Prostate gland (tissue), 2 donors: ENCODE measurements at regions of chr4 and their contacts with region 1.

Region 1: GRCh38 chr4:54228056-54228527 is 1.0 kb upstream of the PDGFRA start:
- DNase-seq: no peak
- H3K4me3 ChIP-seq: peak overlapping the region in 1 of 2 donors; percentile 3
- H3K27ac ChIP-seq: no peak overlapping the region
- H3K4me1 ChIP-seq: no peaks in the 10 kb centered on the region
- H3K27me3 ChIP-seq: peaks cover 20% of the 10 kb centered on the region
- CTCF ChIP-seq: peak in 2 of 4 experiments; percentile 47 to 55
- POLR2A ChIP-seq: no peak

Region 2: DNA sequence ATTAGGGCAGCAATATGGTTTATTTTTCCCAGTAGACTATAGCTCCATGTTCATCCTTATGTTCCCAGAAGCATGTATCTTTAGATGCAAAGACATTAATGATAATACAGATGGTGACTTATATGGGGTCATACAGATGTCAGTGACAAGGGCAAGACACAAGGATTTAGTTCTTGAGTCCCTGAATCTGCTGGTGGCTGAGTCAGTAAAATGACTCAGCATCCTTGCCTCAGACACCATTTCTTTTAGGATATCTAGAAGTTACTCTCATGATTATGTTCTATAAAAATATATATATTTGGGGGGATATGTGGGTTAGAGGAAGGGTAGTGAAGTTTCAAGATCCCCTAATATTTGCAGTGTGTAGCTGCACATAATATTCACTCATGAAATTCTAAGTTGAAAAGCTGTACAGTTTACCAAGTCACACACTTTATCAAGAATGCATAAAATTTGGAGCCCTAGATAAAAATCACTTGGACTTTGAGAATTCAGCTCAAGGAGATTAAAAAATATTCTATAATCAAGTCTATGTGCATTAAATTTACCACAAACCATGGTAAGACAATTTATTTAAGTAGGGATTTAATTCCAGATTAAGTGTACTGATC is 738.7 kb before region 1 on chr4:
- intact Hi-C with region 1: loop called (anchors 10 kb)
- DNase-seq: no peak
- H3K4me3 ChIP-seq: no peak overlapping the region
- H3K27ac ChIP-seq: no peak overlapping the region
- H3K4me1 ChIP-seq: peaks cover 4% of the 10 kb centered on the region
- H3K27me3 ChIP-seq: no peaks in the 10 kb centered on the region
- CTCF ChIP-seq: no peak
- POLR2A ChIP-seq: no peak

Region 3: DNA sequence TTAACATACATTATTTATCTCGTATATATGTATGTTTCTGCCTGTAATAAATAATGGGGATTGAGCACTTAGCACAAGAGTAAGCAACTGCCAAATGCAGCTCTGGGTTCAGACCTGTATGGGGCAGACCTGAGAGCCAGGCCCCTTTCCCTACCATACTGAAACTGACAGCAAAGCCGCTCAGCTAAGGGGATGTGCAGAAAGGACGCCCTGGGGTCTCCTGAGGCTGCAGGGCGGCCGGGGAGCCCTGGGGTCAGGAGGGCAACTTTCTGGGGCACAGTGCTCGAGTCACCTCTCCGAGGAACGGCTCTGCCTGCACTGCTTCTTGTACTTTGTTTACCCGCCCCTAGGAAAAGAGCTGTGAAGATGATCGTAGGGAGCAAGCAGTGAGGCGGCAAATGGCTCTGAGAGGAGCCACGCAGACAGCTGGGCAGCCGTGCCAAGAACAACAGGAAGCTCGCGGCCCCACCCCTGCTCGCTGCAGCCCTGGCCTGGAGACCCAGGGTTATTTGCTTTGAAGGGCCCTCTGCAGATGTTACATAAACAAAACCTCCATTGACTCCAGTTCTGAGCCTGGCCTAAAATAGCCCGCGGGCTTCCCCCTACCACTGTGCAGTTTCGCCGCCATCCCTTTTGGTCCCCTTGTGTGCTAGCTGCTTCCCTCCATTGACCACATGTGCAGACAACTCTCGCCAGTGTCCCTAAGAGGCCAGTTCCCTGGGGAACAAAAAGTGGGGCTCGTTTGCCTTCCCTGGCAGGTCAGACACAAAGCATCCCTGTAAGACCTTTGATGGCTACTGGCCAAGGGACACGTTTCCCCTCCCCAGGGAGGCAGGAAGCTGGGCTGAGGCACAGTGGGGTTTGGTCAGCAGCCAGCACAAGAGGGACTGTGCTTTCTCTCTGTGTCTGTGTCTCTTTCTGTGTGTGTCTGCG is 525.5 kb before region 1 on chr4:
- intact Hi-C with region 1: loop called (anchors 10 kb)
- DNase-seq: peak; percentile 70
- H3K4me3 ChIP-seq: peak overlapping the region in 1 of 2 donors; percentile 1
- H3K27ac ChIP-seq: peak overlapping the region; percentile 39 to 55
- H3K4me1 ChIP-seq: no peaks in the 10 kb centered on the region
- H3K27me3 ChIP-seq: no peaks in the 10 kb centered on the region
- CTCF ChIP-seq: no peak
- POLR2A ChIP-seq: no peak

Region 4: GRCh38 chr4:54333657-54334056 is 105.6 kb after region 1 on chr4:
- intact Hi-C with region 1: no loop called
- DNase-seq: no peak
- H3K4me3 ChIP-seq: no peak overlapping the region
- H3K27ac ChIP-seq: no peak overlapping the region
- H3K4me1 ChIP-seq: no peaks in the 10 kb centered on the region
- H3K27me3 ChIP-seq: no peaks in the 10 kb centered on the region
- CTCF ChIP-seq: no peak
- POLR2A ChIP-seq: no peak

Region 5: DNA sequence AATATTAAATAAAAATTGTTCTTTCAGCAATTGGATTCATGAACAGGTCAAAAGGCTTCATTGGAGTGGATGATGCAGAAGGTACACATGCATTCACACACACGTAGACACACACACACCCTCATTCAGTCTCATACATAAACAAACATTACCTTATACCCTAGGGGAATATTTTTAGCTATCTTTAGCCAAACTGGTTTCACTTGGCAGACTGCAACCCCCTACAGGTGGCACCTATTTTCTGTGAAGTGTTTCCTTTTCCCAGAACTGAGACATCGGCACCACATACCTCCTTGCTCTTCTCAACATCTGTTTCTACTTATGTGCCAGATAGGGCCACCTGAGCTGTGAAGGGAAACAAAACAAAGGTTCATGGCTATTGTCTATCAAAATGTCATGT is 915.8 kb after region 1 on chr4:
- intact Hi-C with region 1: no loop called
- DNase-seq: no peak
- H3K4me3 ChIP-seq: no peak overlapping the region
- H3K27ac ChIP-seq: no peak overlapping the region
- H3K4me1 ChIP-seq: no peaks in the 10 kb centered on the region
- H3K27me3 ChIP-seq: no peaks in the 10 kb centered on the region
- CTCF ChIP-seq: no peak
- POLR2A ChIP-seq: no peak